Naive thymus-derived CD4-positive, alpha-beta T cell (primary cell): ENCODE measurements at regions of chr3 and their contacts with region 1.

Region 1: DNA sequence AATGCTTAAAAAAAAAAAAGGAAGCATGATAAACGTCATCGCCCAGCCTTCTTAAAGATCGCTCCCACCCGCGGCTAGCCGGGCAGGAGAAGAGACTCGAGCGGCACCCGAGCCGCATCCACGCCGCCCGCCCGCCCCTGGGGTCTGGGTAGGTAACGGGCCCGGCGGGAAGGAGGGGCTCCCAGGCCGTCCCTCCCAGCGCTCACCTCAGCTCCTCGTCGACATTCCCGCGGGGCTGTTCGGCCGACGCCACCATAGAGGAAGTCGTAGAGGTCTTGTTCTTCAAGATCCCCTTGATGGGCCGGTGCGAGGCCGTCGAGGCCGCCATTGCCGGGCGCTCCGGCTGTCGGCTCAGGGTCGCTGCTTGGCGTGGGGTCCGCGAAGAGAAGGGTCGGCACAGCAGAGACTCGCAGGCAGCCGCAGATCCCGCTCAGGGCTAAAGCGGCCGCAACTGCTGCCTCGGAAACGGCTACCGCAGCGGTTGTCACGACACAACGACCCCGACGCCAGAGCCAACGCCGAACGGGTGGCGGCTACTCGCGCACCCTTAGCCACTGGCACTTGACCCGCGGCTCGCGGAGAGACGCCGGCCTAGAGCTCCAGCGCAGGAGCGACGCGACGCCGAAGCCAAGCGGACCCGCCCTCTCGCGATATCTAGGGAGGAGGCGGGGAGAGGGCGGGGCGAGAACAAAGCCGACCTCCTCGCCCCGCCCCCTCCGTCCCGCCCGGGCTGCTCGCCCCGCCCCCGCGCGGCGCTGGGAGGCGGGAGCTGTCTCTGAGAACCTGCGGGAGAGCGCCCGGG is at the start of gene PPP1R2:
- DNase-seq: peak; percentile 86 to 97 (median 93)
- ATAC-seq: peak; percentile 94
- H3K4me3 ChIP-seq: peak within 1 kb of the TSS; percentile 63
- H3K4me3 Mint-ChIP-seq: peak within 1 kb of the TSS; percentile 89 to 98 (median 93)
- H3K27ac ChIP-seq: peak within 1 kb of the TSS; percentile 98
- H3K27ac Mint-ChIP-seq: peak within 1 kb of the TSS; percentile 92 to 99 (median 97)
- H3K4me1 ChIP-seq: peaks cover 37 to 66% of the 10 kb centered on the region in 2 donors
- H3K4me1 Mint-ChIP-seq: peaks cover 48 to 77% (median 73%) of the 10 kb centered on the region in 7 donors
- H3K27me3 ChIP-seq: no peaks in the 10 kb centered on the region
- H3K27me3 Mint-ChIP-seq: no peaks in the 10 kb centered on the region
- total RNA-seq, gene PPP1R2: 76.1 to 160 (median 150) TPM

Region 2: DNA sequence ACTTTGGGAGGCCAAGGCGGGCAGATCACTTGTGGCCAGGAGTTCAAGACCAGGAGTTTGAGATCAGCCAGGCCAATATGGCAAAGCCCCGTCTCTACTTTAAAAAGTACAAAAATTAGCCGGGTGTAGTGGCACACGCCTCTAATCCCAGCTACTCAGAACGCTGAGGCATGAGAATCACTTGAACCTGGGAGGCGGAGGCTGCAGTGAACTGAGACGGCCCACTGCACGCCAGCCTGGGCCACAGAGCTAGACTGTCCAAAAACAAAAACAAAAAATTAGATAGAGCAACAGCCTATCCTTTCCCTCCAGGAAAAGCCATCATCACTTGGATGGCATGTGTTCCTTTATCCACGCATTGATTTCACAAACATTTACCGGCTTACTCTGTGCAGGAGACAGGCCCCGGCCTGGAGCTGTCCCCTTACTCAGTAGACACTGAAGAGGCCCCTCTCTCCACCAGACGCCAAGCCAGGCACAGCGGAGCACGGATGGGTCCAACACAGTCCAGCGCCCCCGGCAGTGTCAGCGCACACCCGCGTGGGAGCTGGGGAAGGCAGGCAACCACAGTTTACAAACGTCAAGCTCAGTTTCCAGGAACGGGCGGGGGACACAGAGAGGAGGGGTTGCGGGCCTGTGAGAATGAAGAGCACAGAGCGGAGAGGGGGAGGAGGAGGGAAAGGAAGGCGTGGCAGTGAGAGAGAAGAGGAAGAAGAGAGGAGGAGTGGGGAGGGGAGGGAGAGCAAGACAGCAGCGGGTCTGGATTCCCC is 1146.9 kb before region 1 on chr3:
- CTCF ChIA-PET with region 1: no interaction called
- POLR2A ChIA-PET with region 1: no interaction called
- intact Hi-C with region 1: loop called in 1 of 2 experiments (anchors 10 kb)
- DNase-seq: peak; percentile 29 to 86 (median 74)
- ATAC-seq: peak; percentile 85
- H3K4me3 ChIP-seq: peak overlapping the region; percentile 73
- H3K4me3 Mint-ChIP-seq: peak overlapping the region; percentile 82 to 98 (median 90)
- H3K27ac ChIP-seq: peak overlapping the region; percentile 81
- H3K27ac Mint-ChIP-seq: peak overlapping the region; percentile 73 to 98 (median 93)
- H3K4me1 ChIP-seq: peaks cover 4 to 26% of the 10 kb centered on the region in 2 donors
- H3K4me1 Mint-ChIP-seq: peaks cover 34 to 64% (median 47%) of the 10 kb centered on the region in 7 donors
- H3K27me3 ChIP-seq: no peaks in the 10 kb centered on the region
- H3K27me3 Mint-ChIP-seq: peaks cover 0 to 26% (median 0%) of the 10 kb centered on the region in 5 donors

Region 3: DNA sequence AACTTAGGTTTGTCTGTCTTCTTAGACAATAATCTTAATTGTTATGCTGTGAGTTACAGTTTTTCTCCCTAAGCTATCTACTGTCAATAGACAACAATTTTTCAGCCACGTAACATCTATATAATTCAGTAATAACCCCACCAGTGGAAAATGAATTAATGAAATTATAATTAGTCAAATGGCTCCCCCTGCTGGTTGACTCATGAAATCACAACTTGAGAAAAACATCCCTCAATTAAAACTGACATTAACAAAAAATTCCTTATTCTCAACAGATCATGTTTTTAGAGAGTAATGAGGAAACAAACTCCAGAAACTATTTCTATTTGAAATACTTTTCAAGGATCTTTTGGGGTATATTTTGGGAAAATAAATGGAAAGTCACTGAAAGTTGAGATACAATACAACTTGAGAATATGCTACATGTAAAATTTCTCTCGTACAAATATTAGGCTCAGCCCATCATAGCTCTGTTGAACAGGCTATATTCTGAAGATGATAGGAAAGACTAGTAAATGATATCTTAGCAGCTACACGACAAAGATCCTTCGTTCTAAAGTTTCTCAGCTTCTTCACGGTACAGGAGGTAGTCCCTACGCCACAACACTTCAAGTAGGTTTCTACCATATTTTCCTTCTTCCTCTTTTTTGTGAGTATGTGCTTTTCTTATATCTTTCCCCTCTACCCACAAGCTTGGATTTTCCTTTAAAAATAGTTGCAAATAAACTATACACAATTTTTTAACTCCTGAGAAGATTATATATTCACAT is 20.5 kb before region 1 on chr3:
- CTCF ChIA-PET with region 1: interaction called, 7 read pairs
- POLR2A ChIA-PET with region 1: interaction called, 37 read pairs
- intact Hi-C with region 1: loop called (anchors 1 to 2 kb)
- DNase-seq: peak in 6 of 9 donors; percentile 19 to 56 (median 50)
- ATAC-seq: peak; percentile 64
- H3K4me3 ChIP-seq: no peak overlapping the region
- H3K4me3 Mint-ChIP-seq: peak overlapping the region in 4 of 10 donors; percentile 10 to 61 (median 35)
- H3K27ac ChIP-seq: peak overlapping the region; percentile 50
- H3K27ac Mint-ChIP-seq: peak overlapping the region in 8 of 9 donors; percentile 56 to 91 (median 82)
- H3K4me1 ChIP-seq: peaks cover 18 to 33% of the 10 kb centered on the region in 2 donors
- H3K4me1 Mint-ChIP-seq: peaks cover 18 to 64% (median 56%) of the 10 kb centered on the region in 7 donors
- H3K27me3 ChIP-seq: no peaks in the 10 kb centered on the region
- H3K27me3 Mint-ChIP-seq: no peaks in the 10 kb centered on the region

Region 4: GRCh38 chr3:195558602-195559001 is 15.7 kb after region 1 on chr3:
- CTCF ChIA-PET with region 1: interaction called, 14 read pairs
- POLR2A ChIA-PET with region 1: interaction called, 224 read pairs
- intact Hi-C with region 1: loop called (anchors 1 to 2 kb)
- DNase-seq: peak in 7 of 9 donors; percentile 56 to 75 (median 67)
- ATAC-seq: peak; percentile 72
- H3K4me3 ChIP-seq: no peak overlapping the region
- H3K4me3 Mint-ChIP-seq: peak overlapping the region in 1 of 10 donors; percentile 33
- H3K27ac ChIP-seq: no peak overlapping the region
- H3K27ac Mint-ChIP-seq: peak overlapping the region in 8 of 9 donors; percentile 46 to 83 (median 68)
- H3K4me1 ChIP-seq: peaks cover 0 to 37% of the 10 kb centered on the region in 2 donors
- H3K4me1 Mint-ChIP-seq: peaks cover 20 to 45% (median 38%) of the 10 kb centered on the region in 7 donors
- H3K27me3 ChIP-seq: no peaks in the 10 kb centered on the region
- H3K27me3 Mint-ChIP-seq: no peaks in the 10 kb centered on the region

Region 5: DNA sequence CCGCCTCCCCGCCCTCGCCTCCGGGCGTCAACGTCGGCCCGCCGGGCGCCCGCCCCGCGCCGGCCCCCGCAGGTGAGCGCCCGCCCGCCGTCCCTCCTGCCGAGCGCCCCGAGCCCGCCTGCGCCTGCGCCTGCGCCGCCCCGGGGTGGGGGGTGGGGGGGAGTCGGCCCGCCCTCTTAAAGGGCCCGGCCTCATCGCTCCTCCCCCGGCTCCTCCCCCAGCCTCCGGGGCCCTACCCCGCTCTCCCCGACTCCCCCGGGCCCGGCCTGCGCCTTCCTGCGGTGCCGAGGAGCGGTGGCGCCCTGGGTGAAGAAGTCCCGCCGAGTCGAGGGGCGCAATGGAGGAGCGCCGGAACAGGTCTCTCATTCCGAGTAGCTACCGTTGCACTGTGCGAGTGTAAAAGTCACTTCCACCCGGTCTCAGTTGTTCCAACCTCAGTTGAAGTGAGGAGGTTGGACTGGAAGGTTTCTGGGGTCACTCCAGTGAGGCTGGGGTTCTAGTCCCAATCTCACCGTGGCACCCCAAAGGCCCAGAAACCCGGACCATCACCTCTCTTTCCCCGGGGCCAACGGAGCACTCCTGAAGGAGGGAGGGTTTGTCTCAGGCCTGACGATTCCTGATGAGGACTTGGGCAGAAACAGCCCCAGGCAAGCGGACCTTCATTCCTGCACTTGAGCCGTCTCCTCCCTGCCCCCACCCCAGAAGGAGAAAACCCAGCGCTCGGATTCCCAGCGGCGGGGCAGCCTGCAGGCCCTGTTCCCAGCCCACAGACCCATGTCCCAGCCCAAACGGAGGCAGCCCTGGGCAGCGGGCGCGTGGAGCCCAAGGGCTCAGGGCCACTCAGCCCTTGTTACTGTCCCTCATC is 367.0 kb after region 1 on chr3:
- CTCF ChIA-PET with region 1: no interaction called
- POLR2A ChIA-PET with region 1: interaction called, 12 read pairs
- intact Hi-C with region 1: loop called (anchors 1 to 2 kb)
- DNase-seq: peak; percentile 82 to 93 (median 87)
- ATAC-seq: peak; percentile 81
- H3K4me3 ChIP-seq: peak overlapping the region; percentile 54
- H3K4me3 Mint-ChIP-seq: peak overlapping the region; percentile 40 to 97 (median 70)
- H3K27ac ChIP-seq: peak overlapping the region; percentile 68
- H3K27ac Mint-ChIP-seq: peak overlapping the region in 6 of 9 donors; percentile 10 to 90 (median 68)
- H3K4me1 ChIP-seq: peaks cover 26 to 27% of the 10 kb centered on the region in 2 donors
- H3K4me1 Mint-ChIP-seq: peaks cover 25 to 39% (median 33%) of the 10 kb centered on the region in 7 donors
- H3K27me3 ChIP-seq: no peaks in the 10 kb centered on the region
- H3K27me3 Mint-ChIP-seq: no peaks in the 10 kb centered on the region